ENCODE measurements at regions of chr2 and their contacts with region 1.

Region 1: GRCh38 chr2:8872821-8873432 is 35.5 kb upstream of the KIDINS220 start:
- DNase-seq: no peak
- H3K4me3 ChIP-seq: no peak overlapping the region
- H3K27ac ChIP-seq: no peak overlapping the region
- H3K4me1 ChIP-seq: no peaks in the 10 kb centered on the region
- H3K27me3 ChIP-seq: no peaks in the 10 kb centered on the region
- CTCF ChIP-seq: peak in 2 of 3 donors; percentile 23 to 41
- POLR2A ChIP-seq: no peak

Region 2: GRCh38 chr2:8441986-8442385 is 430.9 kb before region 1 on chr2:
- intact Hi-C with region 1: no loop called
- DNase-seq: no peak
- H3K4me3 ChIP-seq: no peak overlapping the region
- H3K27ac ChIP-seq: no peak overlapping the region
- H3K4me1 ChIP-seq: no peaks in the 10 kb centered on the region
- H3K27me3 ChIP-seq: no peaks in the 10 kb centered on the region
- CTCF ChIP-seq: no peak
- POLR2A ChIP-seq: no peak

Region 3: GRCh38 chr2:9708683-9709538 is 836.0 kb after region 1 on chr2:
- intact Hi-C with region 1: loop called (anchors 5 kb)
- DNase-seq: no peak
- H3K4me3 ChIP-seq: no peak overlapping the region
- H3K27ac ChIP-seq: no peak overlapping the region
- H3K4me1 ChIP-seq: no peaks in the 10 kb centered on the region
- H3K27me3 ChIP-seq: no peaks in the 10 kb centered on the region
- CTCF ChIP-seq: no peak
- POLR2A ChIP-seq: no peak

Measured in breast epithelium (tissue), 4 donors.